Natural killer cell (primary cell): ENCODE measurements at regions of chr11 and their contacts with region 1.

Region 1: GRCh38 chr11:18321980-18322711 is at the starts of genes GTF2H1 and HPS5:
- DNase-seq: peak; percentile 96 to 100
- ATAC-seq: peak; percentile 82 to 94 (median 87)
- H3K4me3 ChIP-seq: peak within 1 kb of the TSS; percentile 94
- H3K4me3 Mint-ChIP-seq: peak within 1 kb of the TSS; percentile 96
- H3K27ac ChIP-seq: peak within 1 kb of the TSS; percentile 99
- H3K27ac Mint-ChIP-seq: peak within 1 kb of the TSS; percentile 99 to 100
- H3K4me1 ChIP-seq: peaks cover 16% of the 10 kb centered on the region
- H3K4me1 Mint-ChIP-seq: peaks cover 51 to 58% of the 10 kb centered on the region in 2 donors
- H3K27me3 ChIP-seq: no peaks in the 10 kb centered on the region
- H3K27me3 Mint-ChIP-seq: no peaks in the 10 kb centered on the region
- CTCF ChIP-seq: no peak
- total RNA-seq, gene GTF2H1: 18.4 to 31.5 (median 22.4) TPM
- total RNA-seq, gene HPS5: 11.5 to 14.5 (median 14.0) TPM

Region 2: GRCh38 chr11:17077520-17078401 is 1244.4 kb before region 1 on chr11 and contains the start of gene RPS13:
- intact Hi-C with region 1: loop called (anchors 5 kb)
- DNase-seq: peak; percentile 91 to 99
- ATAC-seq: peak; percentile 95 to 99 (median 97)
- H3K4me3 ChIP-seq: peak within 1 kb of the TSS; percentile 96
- H3K4me3 Mint-ChIP-seq: peak within 1 kb of the TSS; percentile 95
- H3K27ac ChIP-seq: peak within 1 kb of the TSS; percentile 92
- H3K27ac Mint-ChIP-seq: peak within 1 kb of the TSS; percentile 94 to 99
- H3K4me1 ChIP-seq: peaks cover 21% of the 10 kb centered on the region
- H3K4me1 Mint-ChIP-seq: peaks cover 42 to 44% of the 10 kb centered on the region in 2 donors
- H3K27me3 ChIP-seq: no peaks in the 10 kb centered on the region
- H3K27me3 Mint-ChIP-seq: no peaks in the 10 kb centered on the region
- CTCF ChIP-seq: no peak
- total RNA-seq, gene RPS13: 579 to 685 (median 654) TPM

Region 3: DNA sequence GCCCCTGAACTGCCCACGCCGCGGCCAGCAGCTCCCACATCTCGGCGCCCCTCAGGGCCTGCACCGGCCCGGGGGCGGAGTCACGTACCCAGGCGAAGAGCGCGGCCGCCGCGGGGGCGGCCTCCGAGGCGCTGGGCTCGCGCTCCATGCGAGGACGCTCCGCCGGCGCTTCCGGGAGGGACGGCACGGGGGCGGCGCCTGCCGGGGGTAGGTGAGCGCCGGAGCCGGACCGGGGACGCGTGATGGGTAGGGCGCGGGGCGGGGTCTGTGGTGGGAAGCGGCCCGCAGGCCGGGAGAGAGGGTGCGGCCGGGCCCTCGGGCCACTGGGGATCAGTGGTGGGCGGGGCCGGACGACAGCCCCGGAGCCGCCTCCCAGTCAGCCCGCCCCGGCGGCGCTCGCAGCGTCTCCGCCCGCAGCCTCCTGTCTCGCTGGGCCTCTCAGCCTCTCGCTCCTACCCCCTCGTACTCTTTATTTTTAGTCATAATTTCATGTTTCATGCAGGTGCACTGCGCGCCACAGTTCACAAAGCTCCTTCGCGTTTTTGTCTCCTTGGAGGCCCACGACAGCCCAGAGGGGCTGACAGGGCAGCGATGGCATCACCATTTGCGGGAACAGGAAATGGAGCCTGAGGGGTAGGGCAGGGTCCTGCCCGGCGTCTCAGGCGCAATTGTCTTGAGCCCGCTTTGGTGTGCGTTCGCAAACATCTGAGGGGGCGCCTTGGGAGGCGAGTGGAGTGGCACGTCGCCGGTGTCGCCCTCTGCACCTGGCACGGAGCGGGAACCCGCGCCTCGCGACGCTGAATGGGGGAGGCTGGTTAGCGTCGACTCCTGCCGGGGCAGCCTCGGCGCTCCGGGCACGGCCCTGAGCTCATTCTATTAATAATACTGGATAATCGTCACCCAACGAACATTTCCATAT is 309.0 kb before region 1 on chr11 and contains the start of gene SERGEF:
- intact Hi-C with region 1: loop called (anchors 5 kb)
- DNase-seq: peak; percentile 82 to 95
- ATAC-seq: peak; percentile 82 to 94 (median 85)
- H3K4me3 ChIP-seq: peak within 1 kb of the TSS; percentile 78
- H3K4me3 Mint-ChIP-seq: peak within 1 kb of the TSS; percentile 100
- H3K27ac ChIP-seq: peak within 1 kb of the TSS; percentile 84
- H3K27ac Mint-ChIP-seq: peak within 1 kb of the TSS; percentile 96 to 97
- H3K4me1 ChIP-seq: peaks cover 18% of the 10 kb centered on the region
- H3K4me1 Mint-ChIP-seq: peaks cover 36 to 43% of the 10 kb centered on the region in 2 donors
- H3K27me3 ChIP-seq: no peaks in the 10 kb centered on the region
- H3K27me3 Mint-ChIP-seq: no peaks in the 10 kb centered on the region
- CTCF ChIP-seq: no peak
- total RNA-seq, gene SERGEF: 67.5 to 78.6 (median 69.4) TPM

Region 4: DNA sequence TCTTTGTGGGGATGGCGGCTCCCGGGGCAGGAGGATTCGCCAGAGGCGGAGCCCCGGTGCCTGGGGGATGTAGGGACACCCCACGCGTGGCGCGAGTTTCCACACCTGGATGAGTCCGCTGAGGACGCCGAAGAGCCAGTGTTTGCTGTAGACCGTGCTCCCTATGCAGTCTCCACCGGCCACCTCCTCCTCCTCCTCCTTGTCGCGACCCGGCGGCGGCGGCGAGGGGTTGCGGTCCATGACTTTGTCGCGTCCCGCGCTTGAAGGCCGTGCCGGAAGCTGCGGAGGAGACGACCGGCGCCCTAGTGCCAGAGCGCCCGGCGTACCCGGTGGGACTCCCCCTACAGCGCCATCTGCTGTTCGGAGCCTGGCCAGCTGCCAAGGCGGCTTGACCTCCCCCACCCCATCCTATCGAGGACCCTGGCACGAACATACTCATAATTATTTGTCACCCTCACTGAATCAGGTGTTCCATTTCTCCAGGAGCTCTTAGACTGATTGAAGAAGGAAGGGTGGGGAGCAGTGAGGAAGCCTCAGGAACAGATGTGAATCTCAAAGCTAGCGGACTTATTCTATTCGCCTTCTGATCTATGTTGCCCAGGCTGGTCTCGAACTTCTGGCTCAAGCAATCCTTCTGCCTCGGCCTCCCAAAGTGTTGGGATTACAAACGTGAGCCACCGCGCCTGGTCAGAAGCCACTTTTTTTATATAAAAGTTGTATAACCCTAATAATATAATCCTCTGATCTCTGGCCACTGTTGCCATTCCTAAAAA is 216.2 kb before region 1 on chr11 and contains the start of gene SAAL1:
- intact Hi-C with region 1: loop called (anchors 5 kb)
- DNase-seq: peak; percentile 86 to 94
- ATAC-seq: peak; percentile 99
- H3K4me3 ChIP-seq: peak within 1 kb of the TSS; percentile 93
- H3K4me3 Mint-ChIP-seq: peak within 1 kb of the TSS; percentile 97
- H3K27ac ChIP-seq: peak within 1 kb of the TSS; percentile 62
- H3K27ac Mint-ChIP-seq: peak within 1 kb of the TSS; percentile 81 to 92
- H3K4me1 ChIP-seq: peaks cover 11% of the 10 kb centered on the region
- H3K4me1 Mint-ChIP-seq: peaks cover 25 to 31% of the 10 kb centered on the region in 2 donors
- H3K27me3 ChIP-seq: no peaks in the 10 kb centered on the region
- H3K27me3 Mint-ChIP-seq: peaks cover 4 to 9% of the 10 kb centered on the region in 2 donors
- CTCF ChIP-seq: peak; percentile 89
- total RNA-seq, gene SAAL1: 27.8 to 32.7 (median 29.5) TPM

Region 5: GRCh38 chr11:18304745-18305144 is 17.4 kb before region 1 on chr11:
- intact Hi-C with region 1: no loop called
- DNase-seq: no peak
- ATAC-seq: no peak
- H3K4me3 ChIP-seq: no peak overlapping the region
- H3K4me3 Mint-ChIP-seq: no peak overlapping the region
- H3K27ac ChIP-seq: no peak overlapping the region
- H3K27ac Mint-ChIP-seq: no peak overlapping the region
- H3K4me1 ChIP-seq: no peaks in the 10 kb centered on the region
- H3K4me1 Mint-ChIP-seq: no peaks in the 10 kb centered on the region
- H3K27me3 ChIP-seq: no peaks in the 10 kb centered on the region
- H3K27me3 Mint-ChIP-seq: no peaks in the 10 kb centered on the region
- CTCF ChIP-seq: no peak

Region 6: DNA sequence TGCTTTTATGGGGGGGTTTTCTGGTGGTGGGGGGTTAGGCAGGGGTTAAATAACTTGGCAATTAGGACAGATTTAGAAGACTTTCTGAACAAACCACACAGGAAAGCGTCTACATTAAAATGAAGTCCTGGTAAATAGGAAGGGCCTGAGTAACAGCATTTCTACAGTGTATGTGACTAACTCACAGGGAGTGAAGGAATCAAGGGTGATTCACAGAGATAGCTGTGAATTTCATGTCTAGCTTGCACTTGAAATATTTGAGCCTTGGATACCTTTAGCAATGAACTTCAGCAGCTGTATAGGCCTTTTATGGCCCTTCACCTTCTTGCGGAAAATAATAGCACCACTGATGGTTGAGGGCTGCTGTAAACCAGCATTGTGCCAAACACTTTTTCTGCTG is 46.1 kb after region 1 on chr11:
- intact Hi-C with region 1: no loop called
- DNase-seq: no peak
- ATAC-seq: no peak
- H3K4me3 ChIP-seq: no peak overlapping the region
- H3K4me3 Mint-ChIP-seq: no peak overlapping the region
- H3K27ac ChIP-seq: no peak overlapping the region
- H3K27ac Mint-ChIP-seq: peak overlapping the region in 1 of 2 donors; percentile 8
- H3K4me1 ChIP-seq: no peaks in the 10 kb centered on the region
- H3K4me1 Mint-ChIP-seq: peaks cover 0 to 5% of the 10 kb centered on the region in 2 donors
- H3K27me3 ChIP-seq: no peaks in the 10 kb centered on the region
- H3K27me3 Mint-ChIP-seq: no peaks in the 10 kb centered on the region
- CTCF ChIP-seq: no peak

Region 7: DNA sequence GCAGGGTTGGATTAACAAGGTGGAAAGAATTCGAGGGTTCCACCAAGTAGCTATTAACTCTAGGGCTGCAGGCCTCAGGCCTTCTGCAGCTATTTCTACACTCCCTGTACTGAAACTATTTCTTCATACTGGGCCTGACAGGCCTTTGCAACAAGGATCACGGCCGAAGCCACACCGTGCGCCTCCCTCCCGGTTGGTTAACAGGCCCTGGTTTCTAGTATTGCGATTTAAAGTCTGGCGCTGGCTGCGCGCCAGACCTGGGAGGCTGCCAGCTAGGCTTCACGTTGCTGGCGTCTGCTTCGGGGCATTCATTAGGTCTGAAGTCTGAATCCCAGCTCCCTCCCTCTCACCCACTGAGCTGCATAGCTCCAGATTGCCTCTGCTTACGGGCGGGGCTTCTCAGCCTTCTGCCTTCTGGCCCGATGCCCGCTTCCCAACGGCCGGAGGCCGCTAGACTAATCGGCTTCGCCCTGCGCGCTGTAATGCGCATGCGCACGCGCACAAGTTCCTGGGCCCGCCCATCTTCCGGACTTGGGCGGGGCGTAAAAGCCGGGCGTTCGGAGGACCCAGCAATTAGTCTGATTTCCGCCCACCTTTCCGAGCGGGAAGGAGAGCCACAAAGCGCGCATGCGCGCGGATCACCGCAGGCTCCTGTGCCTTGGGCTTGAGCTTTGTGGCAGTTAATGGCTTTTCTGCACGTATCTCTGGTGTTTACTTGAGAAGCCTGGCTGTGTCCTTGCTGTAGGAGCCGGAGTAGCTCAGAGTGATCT is 73.8 kb after region 1 on chr11:
- intact Hi-C with region 1: loop called (anchors 1 kb)
- DNase-seq: peak; percentile 95 to 98
- ATAC-seq: peak; percentile 71 to 84 (median 71)
- H3K4me3 ChIP-seq: peak overlapping the region; percentile 83
- H3K4me3 Mint-ChIP-seq: peak overlapping the region; percentile 98
- H3K27ac ChIP-seq: peak overlapping the region; percentile 78
- H3K27ac Mint-ChIP-seq: peak overlapping the region; percentile 96
- H3K4me1 ChIP-seq: peaks cover 24% of the 10 kb centered on the region
- H3K4me1 Mint-ChIP-seq: peaks cover 32 to 57% of the 10 kb centered on the region in 2 donors
- H3K27me3 ChIP-seq: no peaks in the 10 kb centered on the region
- H3K27me3 Mint-ChIP-seq: no peaks in the 10 kb centered on the region
- CTCF ChIP-seq: no peak

Region 8: GRCh38 chr11:18526521-18527296 is 204.6 kb after region 1 on chr11 and contains the start of gene TSG101:
- intact Hi-C with region 1: loop called (anchors 1 kb)
- DNase-seq: peak; percentile 95
- ATAC-seq: peak; percentile 78 to 94 (median 83)
- H3K4me3 ChIP-seq: peak within 1 kb of the TSS; percentile 54
- H3K4me3 Mint-ChIP-seq: peak within 1 kb of the TSS; percentile 99
- H3K27ac ChIP-seq: peak within 1 kb of the TSS; percentile 93
- H3K27ac Mint-ChIP-seq: peak within 1 kb of the TSS; percentile 100
- H3K4me1 ChIP-seq: peaks cover 16% of the 10 kb centered on the region
- H3K4me1 Mint-ChIP-seq: peaks cover 43 to 45% of the 10 kb centered on the region in 2 donors
- H3K27me3 ChIP-seq: no peaks in the 10 kb centered on the region
- H3K27me3 Mint-ChIP-seq: no peaks in the 10 kb centered on the region
- CTCF ChIP-seq: no peak
- total RNA-seq, gene TSG101: 22.7 to 35.2 (median 23.0) TPM